ENCODE measurements at regions of chr13 and their contacts with region 1.

Region 1: GRCh38 chr13:114115191-114115671 is 17.2 kb downstream of the RASA3 start:
- DNase-seq: peak; percentile 16 to 20
- H3K4me3 ChIP-seq: no peak overlapping the region
- H3K27ac ChIP-seq: no peak overlapping the region
- H3K4me1 ChIP-seq: no peaks in the 10 kb centered on the region
- H3K27me3 ChIP-seq: no peaks in the 10 kb centered on the region
- CTCF ChIP-seq: no peak
- POLR2A ChIP-seq: no peak

Region 2: GRCh38 chr13:114065141-114065925 is 49.9 kb before region 1 on chr13:
- intact Hi-C with region 1: loop called (anchors 5 kb)
- DNase-seq: peak; percentile 90 to 92
- H3K4me3 ChIP-seq: peak overlapping the region; percentile 35
- H3K27ac ChIP-seq: peak overlapping the region; percentile 96 to 98
- H3K4me1 ChIP-seq: peaks cover 17 to 28% of the 10 kb centered on the region in 2 donors
- H3K27me3 ChIP-seq: no peaks in the 10 kb centered on the region
- CTCF ChIP-seq: peak in 1 of 4 experiments; percentile 5
- POLR2A ChIP-seq: peak; percentile 31 to 49